CD4-positive, alpha-beta memory T cell (primary cell): ENCODE measurements at regions of chr12 and their contacts with region 1.

Region 1: GRCh38 chr12:34022079-34022830 is at the start of gene ALG10:
- DNase-seq: peak; percentile 95 to 98 (median 97)
- H3K4me3 ChIP-seq: peak within 1 kb of the TSS; percentile 82 to 83
- H3K4me3 Mint-ChIP-seq: peak within 1 kb of the TSS; percentile 92 to 97 (median 96)
- H3K27ac ChIP-seq: peak within 1 kb of the TSS; percentile 84
- H3K27ac Mint-ChIP-seq: peak within 1 kb of the TSS; percentile 96 to 99 (median 99)
- H3K4me1 ChIP-seq: peaks cover 19% of the 10 kb centered on the region
- H3K4me1 Mint-ChIP-seq: peaks cover 12 to 23% (median 16%) of the 10 kb centered on the region in 4 donors
- H3K27me3 ChIP-seq: no peaks in the 10 kb centered on the region
- H3K27me3 Mint-ChIP-seq: peaks cover 0 to 2% of the 10 kb centered on the region in 2 donors
- total RNA-seq, gene ALG10: 22.1 to 22.5 TPM

Region 2: DNA sequence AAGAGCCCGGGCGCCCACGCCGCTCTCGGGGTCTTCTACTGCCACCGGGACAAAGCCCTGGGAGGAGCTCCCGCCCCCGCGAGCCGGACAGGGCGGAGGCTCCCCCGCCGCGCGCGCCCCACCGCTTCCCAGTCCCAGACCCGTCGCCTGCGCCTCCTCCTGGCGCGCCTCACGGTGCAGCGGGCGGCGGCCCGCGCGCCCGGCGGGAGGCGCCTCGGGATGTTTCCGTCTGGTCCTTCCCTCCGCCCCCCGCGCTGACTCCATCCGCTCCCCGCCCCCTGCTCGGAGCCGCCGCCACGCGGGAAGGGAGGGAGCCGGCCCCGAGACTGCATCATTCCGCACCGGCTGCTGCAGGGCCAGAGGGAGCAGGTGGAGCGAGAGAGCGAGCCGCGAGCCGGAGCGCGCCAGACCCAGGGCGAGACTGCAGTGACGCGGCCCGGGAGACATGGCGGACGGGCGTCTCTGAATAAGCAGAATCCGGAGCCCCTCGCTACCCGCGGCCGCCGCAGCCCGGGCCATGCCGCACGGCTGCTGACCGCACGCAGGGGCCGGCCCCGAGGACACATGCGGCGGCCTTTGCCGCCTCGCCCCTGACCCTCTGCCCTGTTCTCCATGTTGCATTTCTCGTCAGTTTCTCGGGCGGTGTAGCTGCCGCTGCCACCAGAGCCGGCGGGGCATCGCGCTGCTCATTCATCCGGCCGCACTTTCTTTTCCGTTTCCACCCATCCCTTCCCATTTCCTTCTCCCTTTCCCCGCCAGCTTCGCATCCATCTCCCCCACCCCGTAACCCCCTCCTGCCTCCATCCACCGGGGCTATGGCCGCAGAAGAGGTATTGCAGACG is 1915.5 kb before region 1 on chr12 and contains the start of gene BICD1:
- CTCF ChIA-PET with region 1: interaction called, 4 read pairs
- POLR2A ChIA-PET with region 1: no interaction called
- intact Hi-C with region 1: loop called (anchors 2 kb)
- DNase-seq: peak; percentile 62 to 70 (median 66)
- H3K4me3 ChIP-seq: peak within 1 kb of the TSS; percentile 84 to 93
- H3K4me3 Mint-ChIP-seq: peak within 1 kb of the TSS; percentile 91 to 98 (median 98)
- H3K27ac ChIP-seq: peak within 1 kb of the TSS; percentile 57
- H3K27ac Mint-ChIP-seq: peak within 1 kb of the TSS; percentile 75 to 94 (median 91)
- H3K4me1 ChIP-seq: peaks cover 33% of the 10 kb centered on the region
- H3K4me1 Mint-ChIP-seq: peaks cover 25 to 35% (median 29%) of the 10 kb centered on the region in 4 donors
- H3K27me3 ChIP-seq: no peaks in the 10 kb centered on the region
- H3K27me3 Mint-ChIP-seq: no peaks in the 10 kb centered on the region
- total RNA-seq, gene BICD1: 16.1 to 20.3 TPM

Region 3: GRCh38 chr12:32365473-32366064 is 1656.7 kb before region 1 on chr12:
- CTCF ChIA-PET with region 1: interaction called, 7 read pairs
- POLR2A ChIA-PET with region 1: no interaction called
- intact Hi-C with region 1: loop called (anchors 1 kb)
- DNase-seq: peak; percentile 18 to 40 (median 34)
- H3K4me3 ChIP-seq: no peak overlapping the region
- H3K4me3 Mint-ChIP-seq: no peak overlapping the region
- H3K27ac ChIP-seq: no peak overlapping the region
- H3K27ac Mint-ChIP-seq: peak overlapping the region in 1 of 7 donors; percentile 48
- H3K4me1 ChIP-seq: no peaks in the 10 kb centered on the region
- H3K4me1 Mint-ChIP-seq: no peaks in the 10 kb centered on the region
- H3K27me3 ChIP-seq: no peaks in the 10 kb centered on the region
- H3K27me3 Mint-ChIP-seq: no peaks in the 10 kb centered on the region

Region 4: GRCh38 chr12:32679091-32679919 is 1343.0 kb before region 1 on chr12 and contains the start of gene DNM1L:
- CTCF ChIA-PET with region 1: interaction called, 3 read pairs
- POLR2A ChIA-PET with region 1: interaction called, 4 read pairs
- intact Hi-C with region 1: loop called (anchors 1 kb)
- DNase-seq: peak; percentile 91 to 95 (median 93)
- H3K4me3 ChIP-seq: peak within 1 kb of the TSS; percentile 65 to 69
- H3K4me3 Mint-ChIP-seq: peak within 1 kb of the TSS; percentile 89 to 97 (median 94)
- H3K27ac ChIP-seq: peak within 1 kb of the TSS; percentile 87
- H3K27ac Mint-ChIP-seq: peak within 1 kb of the TSS; percentile 80 to 97 (median 94)
- H3K4me1 ChIP-seq: peaks cover 18% of the 10 kb centered on the region
- H3K4me1 Mint-ChIP-seq: peaks cover 14 to 37% (median 27%) of the 10 kb centered on the region in 4 donors
- H3K27me3 ChIP-seq: no peaks in the 10 kb centered on the region
- H3K27me3 Mint-ChIP-seq: no peaks in the 10 kb centered on the region
- total RNA-seq, gene DNM1L: 42.7 to 50.1 TPM

Region 5: GRCh38 chr12:33609521-33610309 is 412.5 kb before region 1 on chr12:
- CTCF ChIA-PET with region 1: no interaction called
- POLR2A ChIA-PET with region 1: no interaction called
- intact Hi-C with region 1: no loop called
- DNase-seq: no peak
- H3K4me3 ChIP-seq: no peak overlapping the region
- H3K4me3 Mint-ChIP-seq: no peak overlapping the region
- H3K27ac ChIP-seq: no peak overlapping the region
- H3K27ac Mint-ChIP-seq: no peak overlapping the region
- H3K4me1 ChIP-seq: no peaks in the 10 kb centered on the region
- H3K4me1 Mint-ChIP-seq: no peaks in the 10 kb centered on the region
- H3K27me3 ChIP-seq: no peaks in the 10 kb centered on the region
- H3K27me3 Mint-ChIP-seq: no peaks in the 10 kb centered on the region

Region 6: DNA sequence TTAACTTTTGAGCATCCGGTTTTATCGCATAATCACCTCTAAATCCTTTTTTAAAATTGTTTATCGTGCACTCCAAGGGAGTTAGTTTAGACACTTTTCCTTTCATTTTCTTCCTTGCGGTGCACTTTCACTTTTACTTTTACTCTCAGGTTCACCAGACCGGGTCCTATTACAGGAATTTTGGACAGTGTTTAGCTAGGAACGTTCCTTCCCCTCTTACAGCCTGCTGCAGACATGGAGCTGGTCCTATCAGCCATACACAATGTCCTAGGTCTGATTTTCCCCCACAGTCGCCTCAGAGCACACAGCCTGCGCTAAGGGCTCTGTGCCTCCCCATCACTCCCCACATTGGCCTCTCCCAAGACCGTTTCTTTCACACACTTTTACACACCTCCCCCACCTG is 104.0 kb after region 1 on chr12:
- CTCF ChIA-PET with region 1: no interaction called
- POLR2A ChIA-PET with region 1: no interaction called
- intact Hi-C with region 1: loop called (anchors 10 kb)
- DNase-seq: peak in 3 of 5 donors; percentile 9 to 30 (median 12)
- H3K4me3 ChIP-seq: peak overlapping the region; percentile 25 to 60
- H3K4me3 Mint-ChIP-seq: peak overlapping the region; percentile 71 to 88 (median 84)
- H3K27ac ChIP-seq: no peak overlapping the region
- H3K27ac Mint-ChIP-seq: peak overlapping the region in 6 of 7 donors; percentile 2 to 93 (median 81)
- H3K4me1 ChIP-seq: peaks cover 14% of the 10 kb centered on the region
- H3K4me1 Mint-ChIP-seq: peaks cover 12 to 19% (median 14%) of the 10 kb centered on the region in 4 donors
- H3K27me3 ChIP-seq: no peaks in the 10 kb centered on the region
- H3K27me3 Mint-ChIP-seq: peaks cover 4 to 5% of the 10 kb centered on the region in 2 donors